K562 (cell line): ENCODE measurements at regions of chr12 and their contacts with region 1.

Region 1: DNA sequence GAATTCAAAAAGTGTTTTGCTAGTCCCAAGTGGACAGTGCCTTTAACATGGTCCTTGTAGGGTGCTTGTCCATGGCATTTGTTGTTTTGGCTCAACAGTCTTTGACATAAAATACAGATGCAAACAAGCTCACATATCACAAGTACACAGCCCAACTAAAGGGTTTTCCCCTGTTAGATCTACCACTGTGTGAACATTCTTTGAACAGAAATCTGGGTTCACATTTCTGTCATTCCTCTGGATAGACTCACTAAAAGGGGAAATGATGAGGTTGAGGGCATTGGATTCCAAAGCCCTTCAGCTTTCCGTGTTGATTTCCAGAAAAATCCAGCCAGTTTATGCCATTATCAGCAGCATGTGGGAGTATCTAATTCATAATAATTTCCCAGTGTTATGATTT is 54.1 kb downstream of the EP400 start:
- DNase-seq: no peak
- ATAC-seq: no peak
- H3K4me3 ChIP-seq: no peak overlapping the region
- H3K27ac ChIP-seq: no peak overlapping the region
- H3K4me1 ChIP-seq: peaks cover 2 to 4% of the 10 kb centered on the region in 2 experiments; a peak in 2 of 5 replicates
- H3K27me3 ChIP-seq: no peaks in the 10 kb centered on the region
- CTCF ChIP-seq: no peak
- EP300 ChIP-seq: no peak
- POLR2A ChIP-seq: no peak
- RAD21 ChIP-seq: no peak

Region 2: DNA sequence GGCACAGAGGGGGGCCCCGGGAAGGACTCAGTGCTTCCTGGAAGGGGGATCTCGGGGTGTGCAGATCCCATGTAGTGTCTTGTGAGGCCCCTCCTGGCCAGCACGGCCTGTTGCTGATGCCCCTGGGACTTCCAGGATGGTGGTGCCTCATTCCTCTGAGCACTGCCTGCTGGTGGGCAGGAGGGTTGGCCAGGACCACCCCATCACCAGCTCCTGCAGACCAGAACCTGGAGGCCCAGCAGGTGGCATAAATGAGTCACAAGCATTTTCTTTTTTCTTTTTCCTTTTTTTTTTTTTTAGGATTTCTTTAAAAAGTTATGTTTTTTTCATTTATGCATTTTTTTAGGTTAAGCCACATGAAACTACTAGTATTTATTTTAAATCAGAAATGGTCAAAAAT is 167.7 kb before region 1 on chr12:
- CTCF ChIA-PET with region 1: interaction called, 3 read pairs
- POLR2A ChIA-PET with region 1: interaction called, 3 read pairs
- in situ Hi-C with region 1: no loop called
- intact Hi-C with region 1: loop called (anchors 5 kb)
- DNase-seq: no peak
- ATAC-seq: peak; percentile 16; the same call in 1 of the 3 replicates
- H3K4me3 ChIP-seq: no peak overlapping the region
- H3K27ac ChIP-seq: no peak overlapping the region
- H3K4me1 ChIP-seq: peaks cover 0 to 61% of the 10 kb centered on the region in 2 experiments; a peak in 3 of 5 replicates
- H3K27me3 ChIP-seq: no peaks in the 10 kb centered on the region
- CTCF ChIP-seq: peak; percentile 50 to 62 (median 54); a peak in 5 of 6 replicates
- EP300 ChIP-seq: no peak
- POLR2A ChIP-seq: no peak
- RAD21 ChIP-seq: peak in 1 of 2 experiments; percentile 45; a peak in 2 of 4 replicates

Region 3: GRCh38 chr12:131850856-131851559 is 152.8 kb before region 1 on chr12:
- CTCF ChIA-PET with region 1: interaction called, 3 read pairs
- POLR2A ChIA-PET with region 1: no interaction called
- in situ Hi-C with region 1: no loop called
- intact Hi-C with region 1: loop called (anchors 5 kb)
- DNase-seq: no peak
- ATAC-seq: peak; percentile 65
- H3K4me3 ChIP-seq: no peak overlapping the region
- H3K27ac ChIP-seq: no peak overlapping the region
- H3K4me1 ChIP-seq: peaks cover 0 to 63% of the 10 kb centered on the region in 2 experiments; a peak in 2 of 5 replicates
- H3K27me3 ChIP-seq: no peaks in the 10 kb centered on the region
- CTCF ChIP-seq: peak in 2 of 3 experiments; percentile 45 to 55; a peak in 4 of 6 replicates
- EP300 ChIP-seq: no peak
- POLR2A ChIP-seq: no peak
- RAD21 ChIP-seq: peak in 1 of 2 experiments; percentile 58; a peak in 3 of 4 replicates

Region 4: GRCh38 chr12:131949431-131950181 is 54.2 kb before region 1 on chr12 and contains the start of gene EP400:
- CTCF ChIA-PET with region 1: no interaction called
- POLR2A ChIA-PET with region 1: no interaction called
- in situ Hi-C with region 1: no loop called
- intact Hi-C with region 1: loop called (anchors 2 kb)
- DNase-seq: peak; percentile 96 to 97 (median 97)
- ATAC-seq: peak; percentile 95
- H3K4me3 ChIP-seq: peak within 1 kb of the TSS; percentile 97
- H3K27ac ChIP-seq: peak within 1 kb of the TSS; percentile 90
- H3K4me1 ChIP-seq: peaks cover 15 to 44% of the 10 kb centered on the region in 2 experiments
- H3K27me3 ChIP-seq: no peaks in the 10 kb centered on the region
- CTCF ChIP-seq: peak; percentile 40 to 84 (median 84); a peak in 5 of 6 replicates
- EP300 ChIP-seq: no peak
- POLR2A ChIP-seq: peak; percentile 43; the same call in 1 of the 2 replicates
- RAD21 ChIP-seq: peak; percentile 70 to 77
- polyA plus RNA-seq, gene EP400: 4.5 to 6.7 TPM